ENCODE measurements at regions of chr1 and their contacts with region 1.

Region 1: GRCh38 chr1:20767271-20767670 is 19.8 kb downstream of the HP1BP3 start:
- DNase-seq: no peak
- H3K4me3 ChIP-seq: no peak overlapping the region
- H3K4me3 Mint-ChIP-seq: no peak overlapping the region
- H3K27ac ChIP-seq: no peak overlapping the region
- H3K27ac Mint-ChIP-seq: no peak overlapping the region
- H3K4me1 ChIP-seq: no peaks in the 10 kb centered on the region
- H3K4me1 Mint-ChIP-seq: peaks cover 0 to 3% (median under 1%) of the 10 kb centered on the region in 4 donors
- H3K27me3 ChIP-seq: no peaks in the 10 kb centered on the region
- H3K27me3 Mint-ChIP-seq: no peaks in the 10 kb centered on the region

Region 2: GRCh38 chr1:20753589-20753988 is 13.7 kb before region 1 on chr1:
- CTCF ChIA-PET with region 1: interaction called, 3 read pairs
- POLR2A ChIA-PET with region 1: no interaction called
- intact Hi-C with region 1: loop called (anchors 2 kb)
- DNase-seq: no peak
- H3K4me3 ChIP-seq: no peak overlapping the region
- H3K4me3 Mint-ChIP-seq: no peak overlapping the region
- H3K27ac ChIP-seq: no peak overlapping the region
- H3K27ac Mint-ChIP-seq: peak overlapping the region in 1 of 7 donors; percentile 6
- H3K4me1 ChIP-seq: no peaks in the 10 kb centered on the region
- H3K4me1 Mint-ChIP-seq: peaks cover 0 to 7% (median 3%) of the 10 kb centered on the region in 4 donors
- H3K27me3 ChIP-seq: no peaks in the 10 kb centered on the region
- H3K27me3 Mint-ChIP-seq: no peaks in the 10 kb centered on the region

Region 3: GRCh38 chr1:20821466-20821865 is 54.2 kb after region 1 on chr1:
- CTCF ChIA-PET with region 1: no interaction called
- POLR2A ChIA-PET with region 1: no interaction called
- intact Hi-C with region 1: no loop called
- DNase-seq: no peak
- H3K4me3 ChIP-seq: no peak overlapping the region
- H3K4me3 Mint-ChIP-seq: no peak overlapping the region
- H3K27ac ChIP-seq: no peak overlapping the region
- H3K27ac Mint-ChIP-seq: no peak overlapping the region
- H3K4me1 ChIP-seq: no peaks in the 10 kb centered on the region
- H3K4me1 Mint-ChIP-seq: peaks cover 0 to 2% (median 0%) of the 10 kb centered on the region in 4 donors
- H3K27me3 ChIP-seq: no peaks in the 10 kb centered on the region
- H3K27me3 Mint-ChIP-seq: no peaks in the 10 kb centered on the region

Measured in CD4-positive, alpha-beta memory T cell (primary cell).